T-cell (primary cell): ENCODE measurements at regions of chr16 and their contacts with region 1.

Region 1: DNA sequence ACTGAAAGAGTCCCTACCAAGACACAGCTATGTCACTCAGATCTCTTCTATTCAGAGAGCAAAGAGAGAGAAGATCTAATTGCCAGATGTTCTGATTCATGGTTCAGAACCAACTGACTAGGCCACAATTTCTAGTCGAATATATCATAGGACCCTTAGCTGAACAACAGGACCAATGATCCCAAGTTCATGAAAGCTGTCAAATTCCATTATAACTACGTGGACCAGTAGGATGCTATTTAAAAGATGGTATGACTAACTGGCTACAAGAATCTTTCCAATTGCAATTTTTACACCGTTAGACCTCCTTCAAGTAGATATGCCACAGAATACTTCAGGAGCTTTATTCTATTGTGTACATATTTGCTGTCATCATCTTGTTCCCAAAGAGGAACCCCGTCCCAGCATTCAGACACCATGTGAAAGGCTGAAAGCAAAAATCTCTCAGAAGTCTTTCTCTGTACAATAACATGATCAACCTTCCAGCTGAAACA is 26.0 kb downstream of the DCUN1D3 start:
- DNase-seq: no peak
- ATAC-seq: no peak
- H3K4me3 ChIP-seq: peak overlapping the region in 1 of 2 donors; percentile 9
- H3K4me3 Mint-ChIP-seq: peak overlapping the region; percentile 66 to 71 (median 71)
- H3K27ac ChIP-seq: peak overlapping the region; percentile 84
- H3K27ac Mint-ChIP-seq: peak overlapping the region; percentile 97 to 98
- H3K4me1 ChIP-seq: peaks cover 8 to 18% of the 10 kb centered on the region in 2 experiments
- H3K4me1 Mint-ChIP-seq: peaks cover 44 to 51% (median 51%) of the 10 kb centered on the region in 3 donors
- H3K27me3 ChIP-seq: no peaks in the 10 kb centered on the region
- H3K27me3 Mint-ChIP-seq: no peaks in the 10 kb centered on the region

Region 2: GRCh38 chr16:20849587-20850390 is 24.3 kb before region 1 on chr16:
- CTCF ChIA-PET with region 1: interaction called, 3 to 11 read pairs
- POLR2A ChIA-PET with region 1: no interaction called
- DNase-seq: peak in 34 of 35 experiments; percentile 9 to 78 (median 51)
- ATAC-seq: peak in 3 of 4 experiments; percentile 40 to 55 (median 44)
- H3K4me3 ChIP-seq: no peak overlapping the region
- H3K4me3 Mint-ChIP-seq: no peak overlapping the region
- H3K27ac ChIP-seq: no peak overlapping the region
- H3K27ac Mint-ChIP-seq: no peak overlapping the region
- H3K4me1 ChIP-seq: peaks cover 0 to 5% of the 10 kb centered on the region in 2 experiments
- H3K4me1 Mint-ChIP-seq: peaks cover 8 to 14% (median 12%) of the 10 kb centered on the region in 3 donors
- H3K27me3 ChIP-seq: no peaks in the 10 kb centered on the region
- H3K27me3 Mint-ChIP-seq: no peaks in the 10 kb centered on the region

Region 3: GRCh38 chr16:20900299-20901067 is 26.3 kb after region 1 on chr16 and contains the starts of genes DCUN1D3 and LYRM1:
- CTCF ChIA-PET with region 1: interaction called, 5 to 17 read pairs
- POLR2A ChIA-PET with region 1: interaction called in 1 of 2 experiments, 7 read pairs
- DNase-seq: peak; percentile 60 to 93 (median 71)
- ATAC-seq: peak; percentile 76 to 86 (median 79)
- H3K4me3 ChIP-seq: peak within 1 kb of the TSS; percentile 81 to 94
- H3K4me3 Mint-ChIP-seq: peak within 1 kb of the TSS; percentile 87 to 96 (median 90)
- H3K27ac ChIP-seq: peak within 1 kb of the TSS; percentile 95
- H3K27ac Mint-ChIP-seq: peak within 1 kb of the TSS; percentile 90 to 92
- H3K4me1 ChIP-seq: peaks cover 25 to 35% of the 10 kb centered on the region in 2 experiments
- H3K4me1 Mint-ChIP-seq: peaks cover 69 to 77% (median 74%) of the 10 kb centered on the region in 3 donors
- H3K27me3 ChIP-seq: no peaks in the 10 kb centered on the region
- H3K27me3 Mint-ChIP-seq: no peaks in the 10 kb centered on the region
- total RNA-seq, gene DCUN1D3: 3.3 to 7.5 (median 5.7) TPM
- total RNA-seq, gene LYRM1: 16.2 to 23.6 (median 19.6) TPM

Region 4: DNA sequence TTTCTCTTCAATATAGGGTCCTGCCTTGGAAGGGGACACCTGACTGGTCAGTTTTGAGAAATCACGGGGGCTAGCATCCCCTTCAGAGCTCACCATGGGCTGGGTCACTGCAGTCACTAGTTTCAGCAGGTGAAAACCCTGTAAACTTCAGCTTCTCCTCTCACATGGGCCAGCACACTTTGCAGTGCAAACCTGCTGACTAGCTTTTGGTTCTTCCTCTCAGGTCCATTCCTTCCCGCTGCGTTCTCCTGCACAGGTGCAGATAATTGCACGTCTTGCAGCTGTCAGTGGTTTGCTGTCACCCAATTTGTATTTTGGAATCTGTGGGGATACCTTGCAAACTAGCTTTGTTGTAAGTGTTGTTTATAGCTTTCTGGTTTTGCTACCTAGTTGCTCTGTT is 121.6 kb after region 1 on chr16:
- CTCF ChIA-PET with region 1: no interaction called
- POLR2A ChIA-PET with region 1: no interaction called
- DNase-seq: no peak
- ATAC-seq: no peak
- H3K4me3 ChIP-seq: no peak overlapping the region
- H3K4me3 Mint-ChIP-seq: no peak overlapping the region
- H3K27ac ChIP-seq: no peak overlapping the region
- H3K27ac Mint-ChIP-seq: no peak overlapping the region
- H3K4me1 ChIP-seq: no peaks in the 10 kb centered on the region
- H3K4me1 Mint-ChIP-seq: no peaks in the 10 kb centered on the region
- H3K27me3 ChIP-seq: peaks cover 0 to 4% of the 10 kb centered on the region in 2 experiments
- H3K27me3 Mint-ChIP-seq: peaks cover 9 to 14% of the 10 kb centered on the region in 2 donors